ENCODE measurements at regions of chr1 and their contacts with region 1.

Region 1: GRCh38 chr1:159161001-159161718 is 10.3 kb upstream of the CADM3 start:
- DNase-seq: peak; percentile 20
- H3K4me3 Mint-ChIP-seq: no peak overlapping the region
- H3K27ac Mint-ChIP-seq: no peak overlapping the region
- H3K4me1 Mint-ChIP-seq: no peaks in the 10 kb centered on the region
- H3K27me3 Mint-ChIP-seq: peaks cover 10% of the 10 kb centered on the region

Region 2: GRCh38 chr1:159071970-159072582 is 89.1 kb before region 1 on chr1:
- intact Hi-C with region 1: no loop called
- DNase-seq: no peak
- H3K4me3 Mint-ChIP-seq: peak overlapping the region; percentile 12
- H3K27ac Mint-ChIP-seq: peak overlapping the region; percentile 37
- H3K4me1 Mint-ChIP-seq: peaks cover 70% of the 10 kb centered on the region
- H3K27me3 Mint-ChIP-seq: no peaks in the 10 kb centered on the region

Region 3: DNA sequence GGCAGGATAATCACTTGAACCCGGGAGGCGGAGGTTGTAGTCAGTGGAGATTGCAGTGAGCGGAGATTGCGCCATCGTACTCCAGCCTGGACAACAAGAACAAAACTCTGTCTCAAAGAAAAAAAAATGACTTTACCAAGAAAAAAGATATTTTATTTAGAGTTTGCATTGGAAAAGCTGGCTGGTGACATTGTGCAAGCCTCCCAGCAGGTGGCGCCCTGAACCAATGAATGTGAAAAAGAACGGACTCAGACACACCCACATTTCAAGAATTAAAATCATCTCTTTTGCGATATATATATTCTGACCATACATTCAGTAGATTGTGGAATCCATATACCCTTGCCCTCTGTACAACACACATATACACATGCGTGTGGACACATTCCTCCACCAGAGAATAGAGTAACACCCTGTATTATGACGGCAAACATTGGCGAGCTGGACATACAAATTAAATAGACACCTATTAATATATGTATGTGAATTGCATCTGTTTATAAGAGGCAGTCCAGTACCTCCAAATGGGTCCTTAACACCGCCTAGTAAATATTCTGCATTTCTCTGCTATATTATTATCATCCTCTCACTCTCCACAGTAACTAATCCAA is 28.8 kb before region 1 on chr1:
- intact Hi-C with region 1: loop called (anchors 1 kb)
- DNase-seq: peak; percentile 19
- H3K4me3 Mint-ChIP-seq: no peak overlapping the region
- H3K27ac Mint-ChIP-seq: no peak overlapping the region
- H3K4me1 Mint-ChIP-seq: no peaks in the 10 kb centered on the region
- H3K27me3 Mint-ChIP-seq: peaks cover 4% of the 10 kb centered on the region

Region 4: GRCh38 chr1:159177273-159177907 is 16.2 kb after region 1 on chr1:
- intact Hi-C with region 1: no loop called
- DNase-seq: peak; percentile 2
- H3K4me3 Mint-ChIP-seq: no peak overlapping the region
- H3K27ac Mint-ChIP-seq: no peak overlapping the region
- H3K4me1 Mint-ChIP-seq: no peaks in the 10 kb centered on the region
- H3K27me3 Mint-ChIP-seq: peaks cover 20% of the 10 kb centered on the region

Region 5: DNA sequence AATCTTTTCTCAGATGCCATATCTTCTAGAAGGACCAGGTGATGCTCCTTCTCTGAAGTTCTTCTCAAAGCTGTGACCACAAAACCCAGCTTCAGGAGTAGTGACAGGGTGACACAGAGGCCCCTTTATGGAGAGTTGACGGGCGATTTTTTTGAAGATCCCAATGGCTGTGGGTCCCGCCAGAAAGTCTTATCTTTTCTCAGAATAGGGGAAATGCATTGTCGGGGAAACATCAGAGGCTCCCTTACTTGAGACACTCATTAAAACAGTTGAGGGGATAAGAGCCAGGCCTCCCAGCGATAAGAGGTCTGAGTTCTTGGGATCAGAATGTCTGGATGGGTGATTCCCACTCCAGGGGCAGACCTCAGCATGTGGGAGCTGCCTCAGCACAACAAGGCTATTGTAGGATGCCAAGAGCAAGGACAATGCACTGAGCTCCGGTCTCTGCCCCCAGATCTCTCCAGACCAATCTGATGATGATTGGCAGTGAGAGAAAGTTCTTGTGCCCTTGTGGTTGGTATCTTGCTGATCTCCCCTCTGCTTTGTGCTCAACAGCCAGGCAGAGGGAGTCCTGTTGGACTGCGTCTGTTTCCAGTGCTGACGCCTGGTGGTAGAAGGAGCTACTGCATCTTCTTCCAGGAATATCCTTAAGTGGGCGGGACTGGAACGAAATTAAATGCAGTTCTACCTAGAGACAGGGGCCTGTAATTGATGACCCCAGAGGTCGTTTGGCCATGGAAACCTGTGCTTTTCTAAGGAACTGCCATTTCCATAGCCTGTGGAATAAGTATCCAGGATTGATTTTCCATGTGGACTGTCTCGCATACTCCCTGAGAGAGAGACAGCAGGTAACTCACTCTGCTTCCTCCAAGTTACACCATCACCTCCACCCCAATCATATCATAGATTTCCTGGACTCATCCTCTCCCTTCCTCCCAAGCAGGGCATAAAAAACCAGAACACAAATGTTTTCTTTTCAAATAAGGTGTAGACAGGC is 36.7 kb after region 1 on chr1:
- intact Hi-C with region 1: loop called (anchors 1 kb)
- DNase-seq: peak; percentile 16
- H3K4me3 Mint-ChIP-seq: no peak overlapping the region
- H3K27ac Mint-ChIP-seq: no peak overlapping the region
- H3K4me1 Mint-ChIP-seq: no peaks in the 10 kb centered on the region
- H3K27me3 Mint-ChIP-seq: peaks cover 15% of the 10 kb centered on the region

Region 6: GRCh38 chr1:159214149-159214760 is 53.1 kb after region 1 on chr1:
- intact Hi-C with region 1: loop called (anchors 1 kb)
- DNase-seq: peak; percentile 10
- H3K4me3 Mint-ChIP-seq: no peak overlapping the region
- H3K27ac Mint-ChIP-seq: no peak overlapping the region
- H3K4me1 Mint-ChIP-seq: no peaks in the 10 kb centered on the region
- H3K27me3 Mint-ChIP-seq: peaks cover 12% of the 10 kb centered on the region

Region 7: GRCh38 chr1:159891275-159892157 is 730.4 kb after region 1 on chr1:
- intact Hi-C with region 1: loop called (anchors 5 kb)
- DNase-seq: peak; percentile 64
- H3K4me3 Mint-ChIP-seq: no peak overlapping the region
- H3K27ac Mint-ChIP-seq: no peak overlapping the region
- H3K4me1 Mint-ChIP-seq: peaks cover 12% of the 10 kb centered on the region
- H3K27me3 Mint-ChIP-seq: peaks cover 17% of the 10 kb centered on the region

Region 8: DNA sequence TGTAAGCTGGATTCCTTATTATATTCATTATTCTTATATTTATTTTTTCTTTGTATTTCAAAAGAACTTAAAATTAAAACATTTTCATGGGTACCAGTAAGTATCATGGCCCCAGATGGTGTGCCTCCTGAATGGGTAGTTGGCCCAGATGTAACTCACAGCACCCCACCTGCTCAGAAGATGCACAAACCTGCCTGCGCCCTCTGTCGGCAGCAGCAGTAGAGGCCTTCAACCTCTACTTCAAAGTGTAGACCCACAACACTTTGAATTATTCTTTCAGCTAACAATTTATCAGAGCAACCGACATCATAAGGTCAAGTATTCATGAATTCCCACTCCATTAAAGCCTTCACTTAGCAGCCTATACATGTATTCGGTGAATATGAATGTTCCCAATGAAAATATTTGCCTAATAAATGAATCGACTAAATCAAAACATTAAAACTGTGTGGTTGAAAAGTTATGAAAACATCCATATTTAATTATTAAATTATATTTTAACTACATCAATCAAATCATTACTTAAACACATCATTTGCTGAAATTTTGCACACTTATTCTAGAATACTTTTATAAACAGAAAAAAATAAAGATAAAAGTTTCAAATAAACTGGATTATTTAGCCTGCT is 845.3 kb after region 1 on chr1:
- intact Hi-C with region 1: loop called (anchors 2 kb)
- DNase-seq: peak; percentile 55
- H3K4me3 Mint-ChIP-seq: no peak overlapping the region
- H3K27ac Mint-ChIP-seq: no peak overlapping the region
- H3K4me1 Mint-ChIP-seq: no peaks in the 10 kb centered on the region
- H3K27me3 Mint-ChIP-seq: peaks cover 18% of the 10 kb centered on the region

Measured in activated T-helper 1 cell treated with anti-CD3 and anti-CD28 coated beads, Interleukin-12 subunit alpha, Interleukin-12 subunit beta, Interleukin-2, Interleukin-4 antibody, amounts not matched to agents 30 ng/mL and 10 ng/mL and 1 ng/mL, durations not matched to agents 14 hours and 24 hours and 36 hours (primary cell).